ENCODE measurements at regions of chr20 and their contacts with region 1.

Region 1: DNA sequence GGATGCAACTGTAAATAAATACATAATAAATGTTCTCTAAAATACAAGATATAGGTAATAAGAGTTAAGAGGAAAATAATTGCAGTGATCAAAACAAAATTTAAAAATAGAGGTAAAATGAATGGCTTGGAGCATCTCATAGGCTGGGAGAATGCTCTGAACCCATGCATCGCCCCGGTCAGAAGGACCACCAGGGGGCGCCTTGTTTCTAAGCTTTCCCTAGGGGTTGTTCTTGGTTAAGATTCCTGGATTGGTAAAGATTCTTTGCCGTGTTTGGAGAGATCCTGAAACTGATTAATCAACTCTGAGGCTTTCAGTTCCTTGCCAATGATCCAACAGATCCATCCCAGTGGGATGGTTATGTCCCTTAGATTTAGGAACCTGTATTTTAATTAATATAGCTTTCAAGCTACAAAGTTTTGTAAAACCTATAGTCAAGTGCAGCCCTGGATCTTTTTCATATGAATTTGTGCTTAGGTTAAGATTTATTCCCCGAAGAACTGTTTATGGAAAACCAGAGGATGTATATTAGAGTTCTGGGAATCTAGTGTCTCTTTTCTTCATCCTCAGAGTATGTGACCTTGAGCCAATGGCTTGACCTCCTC is 45.3 kb upstream of the PRELID3B start:
- DNase-seq: no peak
- H3K4me3 ChIP-seq: no peak overlapping the region
- H3K27ac ChIP-seq: no peak overlapping the region
- H3K4me1 ChIP-seq: peaks cover 0 to 12% (median 6%) of the 10 kb centered on the region in 4 donors
- H3K27me3 ChIP-seq: no peaks in the 10 kb centered on the region
- CTCF ChIP-seq: peak; percentile 78 to 93 (median 92)
- EP300 ChIP-seq: no peak
- POLR2A ChIP-seq: no peak

Region 2: GRCh38 chr20:59141787-59142581 is 54.1 kb after region 1 on chr20:
- intact Hi-C with region 1: no loop called
- DNase-seq: no peak
- H3K4me3 ChIP-seq: no peak overlapping the region
- H3K27ac ChIP-seq: no peak overlapping the region
- H3K4me1 ChIP-seq: peaks cover 12 to 14% (median 13%) of the 10 kb centered on the region in 4 donors
- H3K27me3 ChIP-seq: no peaks in the 10 kb centered on the region
- CTCF ChIP-seq: no peak
- EP300 ChIP-seq: no peak
- POLR2A ChIP-seq: no peak

Region 3: GRCh38 chr20:59221049-59221706 is 133.2 kb after region 1 on chr20:
- intact Hi-C with region 1: loop called (anchors 2 kb)
- DNase-seq: peak; percentile 86
- H3K4me3 ChIP-seq: no peak overlapping the region
- H3K27ac ChIP-seq: peak overlapping the region in 2 of 4 donors; percentile 15 to 54
- H3K4me1 ChIP-seq: peaks cover 10 to 25% (median 22%) of the 10 kb centered on the region in 4 donors
- H3K27me3 ChIP-seq: peaks cover 0 to 51% (median 0%) of the 10 kb centered on the region in 4 donors
- CTCF ChIP-seq: peak in 1 of 3 experiments; percentile 5
- EP300 ChIP-seq: no peak
- POLR2A ChIP-seq: no peak

Region 4: DNA sequence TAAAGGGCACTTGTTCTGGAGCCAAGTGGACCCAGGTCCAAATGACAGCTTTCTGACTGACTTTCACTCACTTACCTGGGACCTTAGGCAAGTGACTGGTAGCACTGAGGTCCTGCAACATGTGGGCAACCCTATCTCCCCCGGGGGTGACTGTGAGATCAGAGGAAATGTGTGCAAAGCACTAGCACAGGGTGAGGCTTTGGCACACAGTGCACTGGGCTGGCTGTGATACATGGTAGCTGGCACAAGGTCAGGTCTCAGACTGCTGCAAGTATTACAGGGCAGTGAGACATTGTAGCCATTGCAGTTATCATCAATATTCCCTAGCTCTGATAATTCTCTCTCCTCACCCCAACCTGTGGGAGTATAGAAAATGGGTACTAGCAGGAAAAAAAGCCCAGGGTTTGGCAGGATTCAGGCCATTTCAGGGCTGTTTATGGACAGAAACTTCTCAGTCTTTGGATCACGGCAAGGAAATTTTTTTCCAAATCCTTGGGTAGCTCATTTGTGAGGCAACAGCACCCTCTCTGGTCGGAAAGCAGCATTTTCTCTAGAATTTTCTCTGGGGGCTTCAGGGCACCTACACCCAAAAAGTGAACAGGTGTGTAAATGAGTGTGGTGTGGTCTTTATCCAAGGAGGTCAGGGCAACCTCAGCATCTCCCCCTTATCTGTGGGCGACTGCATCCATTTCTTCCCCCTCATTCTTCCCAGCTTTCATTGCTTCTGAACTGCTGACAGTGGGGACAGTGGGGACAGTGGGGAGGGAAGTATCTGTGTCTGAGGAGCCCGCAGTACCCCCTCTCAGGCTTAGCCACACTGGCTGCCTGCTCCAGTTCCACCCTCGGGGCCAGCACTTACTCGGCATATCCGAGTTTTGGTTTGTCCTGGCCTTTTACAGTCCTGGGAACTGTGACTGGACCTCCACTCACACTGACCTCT is 367.7 kb after region 1 on chr20:
- intact Hi-C with region 1: loop called (anchors 5 kb)
- DNase-seq: no peak
- H3K4me3 ChIP-seq: peak overlapping the region in 1 of 4 donors; percentile 6
- H3K27ac ChIP-seq: no peak overlapping the region
- H3K4me1 ChIP-seq: peaks cover 0 to 17% (median 9%) of the 10 kb centered on the region in 4 donors
- H3K27me3 ChIP-seq: peaks cover 0 to 26% (median 0%) of the 10 kb centered on the region in 4 donors
- CTCF ChIP-seq: peak; percentile 57 to 71 (median 65)
- EP300 ChIP-seq: no peak
- POLR2A ChIP-seq: no peak

Region 5: GRCh38 chr20:59527846-59528245 is 439.9 kb after region 1 on chr20:
- intact Hi-C with region 1: no loop called
- DNase-seq: no peak
- H3K4me3 ChIP-seq: no peak overlapping the region
- H3K27ac ChIP-seq: no peak overlapping the region
- H3K4me1 ChIP-seq: peaks cover 0 to 7% (median 3%) of the 10 kb centered on the region in 4 donors
- H3K27me3 ChIP-seq: peaks cover 0 to 57% (median 23%) of the 10 kb centered on the region in 4 donors
- CTCF ChIP-seq: no peak
- EP300 ChIP-seq: no peak
- POLR2A ChIP-seq: no peak